Activated CD4-positive, alpha-beta memory T cell treated with anti-CD3 and anti-CD28 coated beads for 36 hours (primary cell): ENCODE measurements at regions of chr11 and their contacts with region 1.

Region 1: GRCh38 chr11:116986521-116987105 is 111.6 kb downstream of the SIK3 start:
- DNase-seq: peak; percentile 42
- H3K4me3 Mint-ChIP-seq: peak overlapping the region; percentile 63
- H3K27ac Mint-ChIP-seq: peak overlapping the region; percentile 92
- H3K4me1 Mint-ChIP-seq: peaks cover 77% of the 10 kb centered on the region
- H3K27me3 Mint-ChIP-seq: no peaks in the 10 kb centered on the region

Region 2: GRCh38 chr11:116927163-116927974 is 59.2 kb before region 1 on chr11:
- CTCF ChIA-PET with region 1: interaction called, 3 read pairs
- POLR2A ChIA-PET with region 1: interaction called, 11 read pairs
- intact Hi-C with region 1: loop called (anchors 1 kb)
- DNase-seq: peak; percentile 68
- H3K4me3 Mint-ChIP-seq: peak overlapping the region; percentile 38
- H3K27ac Mint-ChIP-seq: peak overlapping the region; percentile 74
- H3K4me1 Mint-ChIP-seq: peaks cover 76% of the 10 kb centered on the region
- H3K27me3 Mint-ChIP-seq: no peaks in the 10 kb centered on the region

Region 3: DNA sequence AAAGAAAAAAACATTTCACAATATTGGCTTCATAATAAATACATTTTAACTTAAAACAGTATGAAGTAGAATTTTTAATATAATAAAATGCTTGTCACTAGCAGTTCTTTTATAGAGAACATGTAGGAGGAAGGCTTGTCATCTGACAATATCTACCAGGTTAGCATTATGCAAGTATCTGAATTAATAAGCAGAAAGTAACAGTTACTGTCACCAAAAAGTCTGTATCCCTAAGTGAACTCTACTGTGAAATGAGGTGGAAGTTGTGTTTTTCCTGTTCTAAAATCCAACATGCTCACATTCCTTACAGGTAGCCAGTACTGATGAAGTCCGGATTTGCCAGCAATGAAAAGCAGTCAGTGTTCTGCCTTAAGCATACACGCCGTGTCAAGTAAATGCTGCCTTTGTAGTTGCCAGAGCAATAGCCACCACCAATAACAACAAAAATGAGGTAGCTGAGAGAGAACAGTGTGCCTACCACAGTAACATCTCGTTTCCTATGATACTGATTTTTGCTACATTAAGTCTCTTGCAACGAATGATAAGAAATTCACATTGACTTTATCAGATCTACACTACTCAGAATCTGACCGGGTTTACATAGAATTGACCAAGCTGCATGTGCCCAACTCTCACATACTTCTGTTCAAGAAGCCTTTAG is 16.2 kb after region 1 on chr11:
- CTCF ChIA-PET with region 1: interaction called, 5 read pairs
- POLR2A ChIA-PET with region 1: interaction called, 15 read pairs
- intact Hi-C with region 1: loop called (anchors 1 kb)
- DNase-seq: no peak
- H3K4me3 Mint-ChIP-seq: peak overlapping the region; percentile 16
- H3K27ac Mint-ChIP-seq: peak overlapping the region; percentile 80
- H3K4me1 Mint-ChIP-seq: peaks cover 69% of the 10 kb centered on the region
- H3K27me3 Mint-ChIP-seq: no peaks in the 10 kb centered on the region

Region 4: GRCh38 chr11:117020287-117020686 is 33.7 kb after region 1 on chr11:
- CTCF ChIA-PET with region 1: interaction called, 9 read pairs
- POLR2A ChIA-PET with region 1: interaction called, 18 read pairs
- intact Hi-C with region 1: loop called (anchors 1 kb)
- DNase-seq: peak; percentile 65
- H3K4me3 Mint-ChIP-seq: no peak overlapping the region
- H3K27ac Mint-ChIP-seq: peak overlapping the region; percentile 11
- H3K4me1 Mint-ChIP-seq: peaks cover 67% of the 10 kb centered on the region
- H3K27me3 Mint-ChIP-seq: no peaks in the 10 kb centered on the region

Region 5: DNA sequence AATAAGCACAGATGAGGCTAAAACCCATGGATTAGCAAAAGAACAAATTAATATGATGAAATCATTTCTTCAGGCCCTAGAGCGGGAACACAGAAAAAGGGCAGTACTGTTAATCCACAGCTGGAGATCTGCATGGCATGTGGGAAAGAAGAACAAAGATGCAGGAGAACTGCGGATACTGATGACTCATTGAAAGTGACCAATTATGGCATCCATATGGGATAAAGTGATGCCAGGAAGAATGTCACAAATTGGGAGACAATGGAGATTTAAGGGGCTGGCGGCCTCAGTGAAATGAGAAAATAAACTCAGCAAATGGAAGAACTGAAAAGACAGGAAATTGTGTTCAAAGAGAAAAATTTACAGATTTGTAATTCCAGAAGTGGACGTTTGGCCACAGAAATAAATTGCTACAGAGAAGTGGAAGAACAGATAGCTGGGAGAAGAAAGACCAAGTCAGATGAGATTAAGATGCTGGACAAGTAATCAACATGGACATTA is 72.2 kb after region 1 on chr11:
- CTCF ChIA-PET with region 1: interaction called, 3 read pairs
- POLR2A ChIA-PET with region 1: interaction called, 12 read pairs
- intact Hi-C with region 1: loop called (anchors 1 kb)
- DNase-seq: no peak
- H3K4me3 Mint-ChIP-seq: no peak overlapping the region
- H3K27ac Mint-ChIP-seq: no peak overlapping the region
- H3K4me1 Mint-ChIP-seq: peaks cover 59% of the 10 kb centered on the region
- H3K27me3 Mint-ChIP-seq: no peaks in the 10 kb centered on the region

Region 6: DNA sequence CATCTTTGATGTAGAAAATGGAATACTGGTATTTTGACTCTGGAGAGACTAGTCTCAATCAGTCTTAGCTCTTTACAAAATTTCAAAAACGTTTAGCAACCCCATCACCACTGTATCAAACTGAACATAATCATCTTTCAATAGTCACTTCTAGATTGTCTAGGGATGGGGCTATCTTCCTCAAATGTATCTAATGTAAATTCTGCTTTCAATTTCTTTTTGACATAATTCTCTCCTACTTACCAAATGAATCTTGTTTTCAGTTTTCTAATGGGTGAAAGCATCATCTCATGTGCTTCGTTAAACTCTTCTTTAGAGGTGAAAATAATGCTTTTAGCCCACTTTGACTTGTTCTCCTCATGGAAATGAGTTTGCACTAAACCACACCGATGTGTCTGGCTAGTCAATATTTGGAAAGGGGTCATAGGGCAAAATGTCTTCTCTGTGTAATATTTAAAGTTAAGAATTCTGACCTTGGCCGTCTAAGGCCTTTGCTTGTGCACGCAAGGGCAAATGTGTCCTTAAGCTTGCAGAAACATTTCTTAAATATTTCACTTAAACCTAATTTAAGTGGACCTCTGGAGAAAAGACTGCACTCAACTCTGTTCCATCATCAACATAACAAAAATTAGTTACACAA is 106.5 kb after region 1 on chr11:
- CTCF ChIA-PET with region 1: interaction called, 5 read pairs
- POLR2A ChIA-PET with region 1: interaction called, 20 read pairs
- intact Hi-C with region 1: loop called (anchors 1 kb)
- DNase-seq: no peak
- H3K4me3 Mint-ChIP-seq: peak overlapping the region; percentile 40
- H3K27ac Mint-ChIP-seq: peak overlapping the region; percentile 73
- H3K4me1 Mint-ChIP-seq: peaks cover 75% of the 10 kb centered on the region
- H3K27me3 Mint-ChIP-seq: no peaks in the 10 kb centered on the region